Endothelial cell of umbilical vein (primary cell): ENCODE measurements at regions of chr7 and their contacts with region 1.

Region 1: DNA sequence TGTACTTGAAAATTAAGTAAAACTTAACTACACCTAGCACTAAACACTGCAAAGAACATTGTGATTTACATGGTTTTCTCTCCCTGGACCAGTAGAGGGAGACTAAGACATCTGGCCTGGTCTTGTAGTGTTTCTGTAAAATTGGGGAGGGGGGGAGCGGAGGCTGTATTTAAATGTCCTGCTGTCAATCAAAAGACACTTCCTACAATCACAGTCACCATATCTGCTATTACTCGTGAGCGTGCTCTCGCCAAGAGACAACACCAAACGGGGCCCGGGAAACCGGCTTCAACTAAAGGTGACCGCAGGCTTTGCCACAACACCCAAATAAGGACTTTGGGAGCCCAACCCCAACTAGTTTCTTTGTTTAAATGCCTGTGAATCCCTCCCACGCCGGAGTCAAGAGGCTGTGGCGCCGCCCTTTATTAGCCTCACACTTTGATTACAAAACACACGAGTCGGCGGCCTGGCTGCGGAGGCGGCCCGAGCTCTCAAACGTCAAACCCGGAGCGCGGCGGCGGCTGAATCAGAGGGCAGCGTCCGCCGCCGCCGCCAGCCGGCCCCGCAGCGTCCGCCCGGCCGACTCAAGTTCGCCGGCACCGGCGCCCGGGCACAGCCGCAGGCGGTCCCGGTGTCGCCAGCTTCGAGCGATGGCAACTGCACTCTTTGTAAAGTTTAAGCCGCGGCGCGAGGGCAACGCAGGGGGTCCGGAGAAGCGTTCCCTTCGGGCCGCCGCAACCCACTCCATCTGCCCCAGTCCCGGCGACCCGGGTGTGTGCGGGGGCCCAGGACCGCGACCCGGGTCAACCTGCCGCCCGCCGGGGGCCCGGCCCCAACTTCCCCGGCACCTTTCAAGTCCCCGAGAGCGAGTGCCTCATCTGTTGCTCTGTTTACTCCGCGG is 1.3 kb downstream of the KDM7A start:
- DNase-seq: peak; percentile 95
- H3K4me3 ChIP-seq: peak overlapping the region; percentile 72 to 95 (median 94)
- H3K27ac ChIP-seq: peak overlapping the region; percentile 79
- H3K4me1 ChIP-seq: peaks cover 8% of the 10 kb centered on the region
- H3K27me3 ChIP-seq: peaks cover 0 to 3% of the 10 kb centered on the region in 2 experiments
- CTCF ChIP-seq: peak; percentile 60 to 75
- POLR2A ChIP-seq: peak; percentile 54

Region 2: DNA sequence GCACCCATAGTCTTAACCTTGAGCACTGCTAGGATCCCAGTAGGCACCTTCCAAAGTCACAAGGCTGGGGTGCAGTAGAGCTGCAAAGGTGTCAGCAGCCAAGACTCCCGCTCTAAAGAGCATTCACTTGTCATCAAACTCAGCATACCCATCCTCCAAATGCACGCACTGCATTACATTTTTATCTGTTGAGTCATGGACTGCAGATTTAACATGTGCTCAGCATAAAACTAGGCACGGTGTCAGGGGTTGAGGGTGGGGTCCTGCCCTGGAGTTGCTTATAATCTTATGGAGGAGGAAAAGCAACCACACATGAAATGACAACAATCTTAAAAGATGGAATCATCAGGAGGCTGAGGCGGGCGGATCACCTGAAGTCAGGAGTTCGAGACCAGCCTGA is 215.3 kb before region 1 on chr7:
- CTCF ChIA-PET with region 1: no interaction called
- POLR2A ChIA-PET with region 1: no interaction called
- dilution Hi-C with region 1: no loop called
- intact Hi-C with region 1: no loop called
- DNase-seq: no peak
- H3K4me3 ChIP-seq: no peak overlapping the region
- H3K27ac ChIP-seq: no peak overlapping the region
- H3K4me1 ChIP-seq: no peaks in the 10 kb centered on the region
- H3K27me3 ChIP-seq: peaks cover 0 to 3% of the 10 kb centered on the region in 2 experiments
- CTCF ChIP-seq: no peak
- POLR2A ChIP-seq: no peak

Region 3: GRCh38 chr7:140041659-140042385 is 133.6 kb before region 1 on chr7:
- CTCF ChIA-PET with region 1: no interaction called
- POLR2A ChIA-PET with region 1: interaction called, 4 read pairs
- dilution Hi-C with region 1: no loop called
- intact Hi-C with region 1: loop called (anchors 2 kb)
- DNase-seq: peak; percentile 91
- H3K4me3 ChIP-seq: peak overlapping the region; percentile 16 to 53 (median 18)
- H3K27ac ChIP-seq: peak overlapping the region; percentile 85
- H3K4me1 ChIP-seq: peaks cover 46% of the 10 kb centered on the region
- H3K27me3 ChIP-seq: no peaks in the 10 kb centered on the region
- CTCF ChIP-seq: no peak
- POLR2A ChIP-seq: peak; percentile 51

Region 4: DNA sequence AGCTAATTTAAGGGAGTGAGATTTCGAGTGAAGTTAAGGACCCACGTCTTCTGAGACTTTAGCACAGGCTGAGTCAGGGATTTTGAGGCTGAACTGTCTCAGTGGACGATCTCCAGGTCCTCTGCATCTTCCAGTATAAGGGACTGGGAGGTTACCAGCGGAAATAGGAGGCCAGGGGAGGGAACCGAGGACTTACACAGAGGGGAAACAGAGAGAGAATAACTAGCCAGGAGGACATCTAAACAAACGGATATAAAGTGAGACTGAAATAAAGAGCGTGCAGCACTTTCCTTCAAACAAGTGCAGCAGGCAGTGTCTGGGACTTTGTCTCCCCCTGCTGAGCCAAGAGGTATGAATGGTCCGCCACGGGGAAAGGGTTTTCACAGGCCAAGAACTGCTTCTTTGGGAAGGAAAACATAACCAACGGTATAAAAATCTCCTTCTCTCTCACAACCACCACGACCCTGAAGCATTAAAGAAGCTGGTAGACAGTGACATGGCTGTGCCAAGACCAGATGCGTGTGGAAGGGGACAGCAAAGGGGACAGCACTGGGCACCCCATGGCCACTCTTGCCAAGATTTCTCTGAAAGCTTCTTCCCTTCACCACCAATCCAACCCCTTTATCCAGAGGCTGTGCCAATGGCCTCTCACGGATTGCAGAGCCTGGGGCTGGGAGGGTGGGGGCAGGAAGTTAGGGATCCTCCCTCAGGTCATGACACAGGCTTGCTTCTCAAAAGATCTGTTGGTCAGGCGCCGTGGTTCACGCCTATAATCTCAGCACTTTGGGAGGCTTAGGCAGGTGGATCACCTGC is 150.9 kb after region 1 on chr7:
- CTCF ChIA-PET with region 1: interaction called, 7 read pairs
- POLR2A ChIA-PET with region 1: no interaction called
- dilution Hi-C with region 1: no loop called
- intact Hi-C with region 1: loop called (anchors 1 kb)
- DNase-seq: peak; percentile 71
- H3K4me3 ChIP-seq: no peak overlapping the region
- H3K27ac ChIP-seq: no peak overlapping the region
- H3K4me1 ChIP-seq: no peaks in the 10 kb centered on the region
- H3K27me3 ChIP-seq: no peaks in the 10 kb centered on the region
- CTCF ChIP-seq: peak; percentile 64 to 76
- POLR2A ChIP-seq: no peak

Region 5: DNA sequence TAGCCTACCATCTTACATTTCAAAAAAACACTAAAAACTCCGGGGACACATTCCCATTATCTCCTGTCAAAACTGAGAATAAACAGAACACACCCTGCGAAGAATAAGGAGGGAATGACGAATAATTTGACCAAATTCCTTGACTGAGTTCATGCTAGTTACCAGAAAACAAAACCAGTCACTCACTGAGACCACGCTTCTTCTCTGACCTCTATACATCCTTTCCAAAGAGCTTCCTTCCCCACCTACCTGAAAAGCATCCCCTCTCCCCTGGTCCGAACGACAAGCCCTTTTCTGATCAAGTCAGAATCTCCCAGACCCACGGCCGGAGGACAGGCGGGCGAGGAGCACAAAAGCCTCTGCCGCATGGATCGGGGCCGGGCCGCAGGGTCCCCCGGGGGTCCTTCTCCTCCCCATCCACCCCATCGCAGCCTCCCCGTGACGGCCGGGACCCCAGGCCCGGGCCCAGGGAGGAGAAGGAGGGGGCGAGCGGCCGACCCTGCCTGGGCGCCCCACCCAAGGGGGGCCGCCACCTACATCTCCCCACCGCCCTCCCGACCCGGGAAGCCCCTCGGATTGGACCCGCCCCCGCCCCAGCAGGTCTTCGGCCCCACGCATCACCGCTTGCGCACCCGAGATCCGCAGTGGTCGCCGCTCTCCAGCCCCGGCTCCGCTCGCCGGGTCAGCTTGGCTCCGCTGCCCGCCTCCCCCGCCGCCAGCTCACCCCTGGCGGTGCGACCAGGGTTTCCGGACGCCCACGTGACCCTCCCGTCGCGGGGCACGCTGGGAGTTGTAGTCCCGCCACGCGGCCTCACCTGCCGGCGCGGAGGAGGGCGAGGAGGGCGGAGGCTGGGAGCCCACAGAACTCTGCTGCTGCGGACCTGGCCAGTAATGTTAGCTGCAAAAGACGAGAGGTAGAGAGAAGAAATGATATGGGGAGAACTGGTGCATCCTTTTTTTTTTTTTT is 222.6 kb after region 1 on chr7 and contains the start of gene SLC37A3:
- CTCF ChIA-PET with region 1: no interaction called
- POLR2A ChIA-PET with region 1: no interaction called
- dilution Hi-C with region 1: no loop called
- intact Hi-C with region 1: loop called (anchors 2 kb)
- DNase-seq: peak; percentile 74
- H3K4me3 ChIP-seq: peak within 1 kb of the TSS; percentile 68 to 100 (median 86)
- H3K27ac ChIP-seq: peak within 1 kb of the TSS; percentile 60
- H3K4me1 ChIP-seq: peaks cover 18% of the 10 kb centered on the region
- H3K27me3 ChIP-seq: no peaks in the 10 kb centered on the region
- CTCF ChIP-seq: no peak
- POLR2A ChIP-seq: peak; percentile 82
- total RNA-seq, gene SLC37A3: 32.7 and 35.3 TPM in 2 replicates

Region 6: DNA sequence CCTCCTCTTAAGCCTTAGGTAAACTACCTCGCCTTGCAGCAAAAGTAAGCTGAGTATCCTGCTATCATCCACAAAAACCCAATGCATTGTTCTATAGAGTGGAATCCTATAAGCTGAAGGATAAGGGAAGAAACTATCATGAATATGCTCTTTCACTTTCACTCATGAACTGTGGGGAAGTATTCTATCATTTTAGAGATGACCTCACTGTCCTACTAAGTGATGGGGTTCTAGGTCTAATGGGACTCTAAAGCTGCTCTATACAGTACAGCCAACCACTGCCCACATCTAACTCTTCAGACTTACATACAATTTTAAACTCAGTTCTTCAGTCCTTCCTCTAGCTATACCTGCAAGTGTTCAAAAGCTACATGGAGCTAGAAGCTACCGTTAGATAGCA is 287.6 kb after region 1 on chr7:
- CTCF ChIA-PET with region 1: no interaction called
- POLR2A ChIA-PET with region 1: no interaction called
- dilution Hi-C with region 1: no loop called
- intact Hi-C with region 1: no loop called
- DNase-seq: no peak
- H3K4me3 ChIP-seq: no peak overlapping the region
- H3K27ac ChIP-seq: no peak overlapping the region
- H3K4me1 ChIP-seq: no peaks in the 10 kb centered on the region
- H3K27me3 ChIP-seq: no peaks in the 10 kb centered on the region
- CTCF ChIP-seq: no peak
- POLR2A ChIP-seq: no peak

Region 7: GRCh38 chr7:140479062-140479738 is 303.7 kb after region 1 on chr7 and contains the start of gene MKRN1:
- CTCF ChIA-PET with region 1: interaction called, 3 read pairs
- POLR2A ChIA-PET with region 1: interaction called, 3 read pairs
- dilution Hi-C with region 1: no loop called
- intact Hi-C with region 1: loop called (anchors 1 kb)
- DNase-seq: peak; percentile 85
- H3K4me3 ChIP-seq: peak within 1 kb of the TSS; percentile 84 to 93 (median 89)
- H3K27ac ChIP-seq: peak within 1 kb of the TSS; percentile 39
- H3K4me1 ChIP-seq: peaks cover 13% of the 10 kb centered on the region
- H3K27me3 ChIP-seq: peaks cover 0 to 5% of the 10 kb centered on the region in 2 experiments
- CTCF ChIP-seq: no peak
- POLR2A ChIP-seq: peak; percentile 64
- total RNA-seq, gene MKRN1: 52.1 and 52.2 TPM in 2 replicates

Region 8: DNA sequence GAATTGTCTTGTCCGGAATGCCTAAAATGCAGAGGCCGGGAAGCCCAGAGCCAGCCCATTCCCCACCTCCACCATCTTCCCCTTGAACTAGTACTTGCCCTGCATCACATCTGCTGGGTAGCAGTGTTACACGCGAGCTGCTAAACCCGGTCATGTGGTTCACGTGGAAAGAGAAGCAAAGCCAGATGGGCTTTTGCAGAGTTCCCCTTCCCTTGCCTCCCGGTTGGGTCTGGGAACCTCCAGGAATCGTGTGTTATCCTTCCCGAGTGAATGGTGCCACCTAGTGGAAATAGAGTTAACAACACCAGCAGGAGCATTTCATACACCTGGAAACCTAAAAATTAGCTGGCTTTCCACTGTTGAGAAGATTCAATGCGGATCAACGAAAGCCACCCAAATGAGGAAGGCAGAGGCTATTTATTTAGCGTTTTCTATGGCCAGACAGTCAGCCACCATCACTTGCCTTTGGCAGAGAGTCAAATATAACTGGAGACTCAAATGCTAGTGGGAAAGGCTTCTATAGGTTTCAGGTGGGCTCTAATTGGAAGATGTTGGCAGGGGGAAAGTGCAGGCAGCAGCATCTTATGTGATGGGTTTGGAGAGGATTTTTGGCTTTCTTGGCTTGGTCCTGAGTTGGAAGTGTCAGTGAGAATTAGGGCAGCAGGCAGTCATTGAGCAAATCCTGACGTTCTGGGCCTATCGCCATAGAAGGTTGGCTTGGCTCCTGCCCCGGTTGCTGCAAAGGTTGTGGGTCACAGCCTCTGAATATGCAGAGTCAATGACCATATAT is 478.0 kb after region 1 on chr7:
- CTCF ChIA-PET with region 1: no interaction called
- POLR2A ChIA-PET with region 1: no interaction called
- dilution Hi-C with region 1: no loop called
- intact Hi-C with region 1: loop called (anchors 1 kb)
- DNase-seq: peak; percentile 62
- H3K4me3 ChIP-seq: no peak overlapping the region
- H3K27ac ChIP-seq: no peak overlapping the region
- H3K4me1 ChIP-seq: peaks cover 8% of the 10 kb centered on the region
- H3K27me3 ChIP-seq: no peaks in the 10 kb centered on the region
- CTCF ChIP-seq: peak; percentile 65 to 74
- POLR2A ChIP-seq: no peak